B cell (primary cell): ENCODE measurements at regions of chr7 and their contacts with region 1.

Region 1: DNA sequence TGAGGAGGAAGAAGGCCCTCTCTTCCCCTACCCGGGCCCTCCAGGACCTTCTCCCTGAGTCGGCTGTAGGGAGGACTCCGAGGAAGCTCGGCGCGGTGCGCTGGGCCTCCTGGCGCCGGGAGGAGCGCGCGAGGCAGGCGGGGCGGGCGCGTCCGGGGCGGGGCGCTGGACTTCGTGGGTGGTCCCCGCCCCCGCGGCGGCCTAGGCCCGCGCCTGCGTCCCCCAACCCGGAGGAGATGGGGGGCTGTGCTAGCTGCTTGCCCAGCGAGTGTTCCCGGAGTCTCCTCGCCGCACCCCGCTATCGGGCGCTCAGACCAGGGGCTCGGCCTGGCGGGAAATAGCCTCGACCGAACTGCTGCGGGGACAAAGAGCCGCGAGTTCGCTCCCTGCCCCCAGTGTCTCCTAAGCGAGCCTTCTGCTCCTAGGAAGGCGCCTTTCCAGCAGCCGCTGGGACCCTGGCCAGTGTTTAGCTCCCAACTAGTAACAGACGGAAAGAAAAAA is 19.2 kb upstream of the SMO start:
- DNase-seq: peak; percentile 65
- ATAC-seq: peak; percentile 74
- H3K4me3 ChIP-seq: peak overlapping the region; percentile 44 to 83 (median 64)
- H3K4me3 Mint-ChIP-seq: peak overlapping the region; percentile 92
- H3K27ac ChIP-seq: peak overlapping the region; percentile 67 to 73
- H3K27ac Mint-ChIP-seq: peak overlapping the region; percentile 94
- H3K4me1 ChIP-seq: peaks cover 24 to 30% of the 10 kb centered on the region in 2 donors
- H3K4me1 Mint-ChIP-seq: peaks cover 47% of the 10 kb centered on the region
- H3K27me3 ChIP-seq: no peaks in the 10 kb centered on the region
- H3K27me3 Mint-ChIP-seq: no peaks in the 10 kb centered on the region
- CTCF ChIP-seq: no peak

Region 2: GRCh38 chr7:129144095-129144833 is 25.0 kb before region 1 on chr7 and contains the start of gene TSPAN33:
- CTCF ChIA-PET with region 1: interaction called, 168 read pairs
- POLR2A ChIA-PET with region 1: interaction called, 9 read pairs
- intact Hi-C with region 1: loop called (anchors 2 kb)
- DNase-seq: peak; percentile 78
- ATAC-seq: peak; percentile 75
- H3K4me3 ChIP-seq: peak within 1 kb of the TSS; percentile 84 to 100 (median 92)
- H3K4me3 Mint-ChIP-seq: peak within 1 kb of the TSS; percentile 99
- H3K27ac ChIP-seq: peak within 1 kb of the TSS; percentile 81 to 97
- H3K27ac Mint-ChIP-seq: peak within 1 kb of the TSS; percentile 99
- H3K4me1 ChIP-seq: peaks cover 44 to 59% of the 10 kb centered on the region in 2 donors
- H3K4me1 Mint-ChIP-seq: peaks cover 59% of the 10 kb centered on the region
- H3K27me3 ChIP-seq: no peaks in the 10 kb centered on the region
- H3K27me3 Mint-ChIP-seq: no peaks in the 10 kb centered on the region
- CTCF ChIP-seq: no peak
- total RNA-seq, gene TSPAN33: 111 and 117 TPM in 2 replicates

Region 3: DNA sequence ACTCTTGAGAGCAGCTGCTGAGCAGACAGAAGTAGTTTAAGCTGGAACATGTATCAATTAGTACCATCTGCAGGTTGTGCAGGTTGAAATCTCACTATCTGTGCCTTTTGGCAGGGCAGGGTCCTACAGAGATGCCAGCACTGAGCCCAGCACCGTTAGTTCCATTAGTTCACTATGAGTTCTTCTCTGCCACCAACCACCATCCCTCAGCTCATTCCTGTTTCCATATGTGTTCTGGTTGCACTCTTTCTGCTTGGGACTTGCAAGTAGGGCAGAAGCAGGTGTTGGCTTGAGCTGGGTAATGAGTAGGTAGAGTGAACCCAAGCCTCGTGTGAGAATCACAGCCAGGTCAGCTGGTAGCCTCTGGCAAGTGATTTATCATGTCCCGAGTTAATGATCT is 22.1 kb after region 1 on chr7:
- CTCF ChIA-PET with region 1: interaction called, 12 read pairs
- POLR2A ChIA-PET with region 1: no interaction called
- intact Hi-C with region 1: loop called (anchors 1 kb)
- DNase-seq: no peak
- ATAC-seq: no peak
- H3K4me3 ChIP-seq: no peak overlapping the region
- H3K4me3 Mint-ChIP-seq: no peak overlapping the region
- H3K27ac ChIP-seq: no peak overlapping the region
- H3K27ac Mint-ChIP-seq: no peak overlapping the region
- H3K4me1 ChIP-seq: peaks cover 15 to 17% of the 10 kb centered on the region in 2 donors
- H3K4me1 Mint-ChIP-seq: peaks cover 22% of the 10 kb centered on the region
- H3K27me3 ChIP-seq: peaks cover 0 to 36% (median 18%) of the 10 kb centered on the region in 4 experiments
- H3K27me3 Mint-ChIP-seq: peaks cover 33% of the 10 kb centered on the region
- CTCF ChIP-seq: no peak